ENCODE measurements at regions of chrX and their contacts with region 1.

Region 1: DNA sequence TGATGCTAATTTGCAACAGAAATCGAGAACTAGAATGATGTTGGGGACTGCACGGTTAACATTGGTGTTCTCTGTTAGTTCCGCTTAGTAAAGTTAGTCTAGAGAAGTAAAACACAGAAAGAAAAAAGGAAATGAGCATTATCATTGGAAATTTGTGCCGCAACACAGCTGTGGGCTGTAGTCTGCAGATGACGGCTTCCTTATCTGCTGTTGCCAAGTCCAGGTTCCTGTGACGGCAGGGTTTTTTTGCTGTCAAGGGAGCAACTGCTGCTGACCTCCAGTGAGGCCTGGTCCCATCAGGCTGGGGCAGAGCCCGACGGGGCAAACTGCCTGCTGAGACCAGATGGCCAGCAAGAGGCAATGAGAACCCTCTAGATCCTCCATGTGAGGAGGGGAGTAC is 38.9 kb upstream of the PHEX start:
- DNase-seq: peak; percentile 75
- ATAC-seq: peak; percentile 80
- H3K4me3 ChIP-seq: no peak overlapping the region
- H3K4me3 Mint-ChIP-seq: peak overlapping the region; percentile 34
- H3K27ac ChIP-seq: peak overlapping the region; percentile 78 to 90
- H3K27ac Mint-ChIP-seq: peak overlapping the region; percentile 89
- H3K4me1 ChIP-seq: peaks cover 14 to 42% of the 10 kb centered on the region in 2 donors
- H3K4me1 Mint-ChIP-seq: peaks cover 46% of the 10 kb centered on the region
- H3K27me3 ChIP-seq: no peaks in the 10 kb centered on the region
- H3K27me3 Mint-ChIP-seq: no peaks in the 10 kb centered on the region
- CTCF ChIP-seq: no peak

Region 2: DNA sequence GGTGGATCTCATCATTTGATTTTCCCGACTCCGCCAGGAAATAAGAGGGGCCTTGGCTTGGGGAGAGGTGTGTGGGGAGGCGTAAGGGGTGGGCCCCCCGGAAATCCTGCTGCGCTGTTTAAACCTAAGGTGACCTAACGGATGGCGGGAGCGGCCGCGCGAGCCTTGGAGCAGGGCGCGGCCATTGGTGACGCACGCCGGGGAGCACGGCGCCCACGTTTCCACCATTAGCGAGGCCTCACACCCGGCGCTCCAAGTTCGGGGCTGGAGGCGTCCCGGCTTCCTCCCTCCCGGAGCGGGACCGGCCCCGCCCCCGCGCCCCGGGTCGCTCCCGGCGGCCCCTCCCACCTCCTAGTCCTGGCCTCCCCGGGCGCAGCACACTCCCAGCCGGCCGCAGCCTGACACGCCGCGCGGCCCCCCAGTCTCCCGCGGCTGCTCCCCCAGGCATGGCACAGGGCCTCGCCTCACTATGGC is 52.9 kb before region 1 on chrX and contains the start of gene SMS:
- CTCF ChIA-PET with region 1: no interaction called
- POLR2A ChIA-PET with region 1: no interaction called
- intact Hi-C with region 1: no loop called
- DNase-seq: peak; percentile 61
- ATAC-seq: peak; percentile 52
- H3K4me3 ChIP-seq: peak within 1 kb of the TSS; percentile 5 to 66 (median 58)
- H3K4me3 Mint-ChIP-seq: peak within 1 kb of the TSS; percentile 87
- H3K27ac ChIP-seq: peak within 1 kb of the TSS; percentile 27 to 54
- H3K27ac Mint-ChIP-seq: peak within 1 kb of the TSS; percentile 88
- H3K4me1 ChIP-seq: peaks cover 6 to 23% of the 10 kb centered on the region in 2 donors
- H3K4me1 Mint-ChIP-seq: peaks cover 28% of the 10 kb centered on the region
- H3K27me3 ChIP-seq: no peaks in the 10 kb centered on the region
- H3K27me3 Mint-ChIP-seq: no peaks in the 10 kb centered on the region
- CTCF ChIP-seq: no peak
- total RNA-seq, gene SMS: 27.2 and 30.5 TPM in 2 replicates

Region 3: DNA sequence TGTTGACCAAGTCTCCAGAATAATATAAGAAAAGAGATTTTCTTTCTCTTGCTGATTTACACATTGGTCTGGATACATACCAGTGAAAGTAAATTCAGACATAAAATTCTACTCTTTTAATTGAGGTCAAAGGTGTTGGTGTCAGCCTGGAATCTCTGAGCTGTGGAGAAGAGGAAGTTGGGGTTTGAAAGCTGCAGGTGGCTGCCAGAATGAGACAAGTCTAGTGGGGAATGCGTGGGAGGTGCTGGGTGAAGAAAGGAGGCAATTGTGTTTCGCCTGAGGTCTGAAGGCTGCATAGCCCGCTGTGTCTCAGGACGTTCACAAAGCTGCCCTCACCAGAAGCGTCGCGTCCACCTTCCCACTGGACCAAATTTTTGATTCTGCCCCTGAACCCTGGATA is 70.0 kb after region 1 on chrX:
- CTCF ChIA-PET with region 1: no interaction called
- POLR2A ChIA-PET with region 1: no interaction called
- intact Hi-C with region 1: loop called (anchors 5 kb)
- DNase-seq: peak; percentile 78
- ATAC-seq: peak; percentile 90
- H3K4me3 ChIP-seq: no peak overlapping the region
- H3K4me3 Mint-ChIP-seq: peak overlapping the region; percentile 20
- H3K27ac ChIP-seq: peak overlapping the region; percentile 63 to 73
- H3K27ac Mint-ChIP-seq: peak overlapping the region; percentile 85
- H3K4me1 ChIP-seq: peaks cover 43 to 62% of the 10 kb centered on the region in 2 donors
- H3K4me1 Mint-ChIP-seq: peaks cover 73% of the 10 kb centered on the region
- H3K27me3 ChIP-seq: no peaks in the 10 kb centered on the region
- H3K27me3 Mint-ChIP-seq: no peaks in the 10 kb centered on the region
- CTCF ChIP-seq: no peak